Activated naive CD4-positive, alpha-beta T cell treated with anti-CD3 and anti-CD28 coated beads, Interleukin-2, amount 10 ng/mL, durations not matched to agents 7 days and 5 days (primary cell): ENCODE measurements at regions of chr1 and their contacts with region 1.

Region 1: GRCh38 chr1:234309598-234310459 is 63.4 kb upstream of the COA6 start:
- DNase-seq: peak; percentile 80
- H3K4me3 Mint-ChIP-seq: no peak overlapping the region
- H3K27ac Mint-ChIP-seq: no peak overlapping the region
- H3K4me1 Mint-ChIP-seq: peaks cover 6% of the 10 kb centered on the region
- H3K27me3 Mint-ChIP-seq: peaks cover 4% of the 10 kb centered on the region

Region 2: DNA sequence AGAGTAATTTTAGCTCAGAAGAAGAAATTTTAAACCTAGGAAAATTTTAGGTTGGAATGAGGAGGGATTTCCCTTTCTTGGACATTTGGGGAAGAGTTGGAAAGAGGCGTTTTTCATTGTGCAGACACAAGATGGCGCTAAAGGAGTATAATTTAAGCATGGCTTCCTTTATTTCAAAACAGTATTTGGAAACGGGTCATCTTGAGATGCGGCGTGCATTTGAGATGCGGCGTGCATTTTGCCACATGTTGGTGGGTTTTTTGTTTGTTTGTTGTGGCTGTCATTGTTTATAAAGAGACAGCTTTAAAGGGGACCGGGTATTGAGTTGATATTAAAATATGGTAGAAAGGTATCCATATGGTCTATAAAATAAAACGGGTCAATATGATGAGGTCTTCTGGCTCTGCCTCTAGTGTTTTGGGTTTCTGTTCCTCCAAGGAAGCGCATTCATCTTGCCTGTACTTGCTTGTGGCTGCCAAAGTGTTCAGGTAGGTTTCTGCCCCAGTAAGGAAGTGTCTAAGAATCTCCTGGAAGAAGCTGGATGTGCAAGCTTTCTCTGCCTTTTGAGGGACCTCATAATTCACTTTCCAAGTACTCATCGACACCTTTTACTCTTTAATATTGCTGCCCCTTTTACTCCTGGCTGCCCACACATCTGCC is 195.1 kb before region 1 on chr1:
- CTCF ChIA-PET with region 1: interaction called, 47 read pairs
- DNase-seq: peak; percentile 42
- H3K4me3 Mint-ChIP-seq: no peak overlapping the region
- H3K27ac Mint-ChIP-seq: no peak overlapping the region
- H3K4me1 Mint-ChIP-seq: peaks cover 8% of the 10 kb centered on the region
- H3K27me3 Mint-ChIP-seq: peaks cover 32% of the 10 kb centered on the region

Region 3: DNA sequence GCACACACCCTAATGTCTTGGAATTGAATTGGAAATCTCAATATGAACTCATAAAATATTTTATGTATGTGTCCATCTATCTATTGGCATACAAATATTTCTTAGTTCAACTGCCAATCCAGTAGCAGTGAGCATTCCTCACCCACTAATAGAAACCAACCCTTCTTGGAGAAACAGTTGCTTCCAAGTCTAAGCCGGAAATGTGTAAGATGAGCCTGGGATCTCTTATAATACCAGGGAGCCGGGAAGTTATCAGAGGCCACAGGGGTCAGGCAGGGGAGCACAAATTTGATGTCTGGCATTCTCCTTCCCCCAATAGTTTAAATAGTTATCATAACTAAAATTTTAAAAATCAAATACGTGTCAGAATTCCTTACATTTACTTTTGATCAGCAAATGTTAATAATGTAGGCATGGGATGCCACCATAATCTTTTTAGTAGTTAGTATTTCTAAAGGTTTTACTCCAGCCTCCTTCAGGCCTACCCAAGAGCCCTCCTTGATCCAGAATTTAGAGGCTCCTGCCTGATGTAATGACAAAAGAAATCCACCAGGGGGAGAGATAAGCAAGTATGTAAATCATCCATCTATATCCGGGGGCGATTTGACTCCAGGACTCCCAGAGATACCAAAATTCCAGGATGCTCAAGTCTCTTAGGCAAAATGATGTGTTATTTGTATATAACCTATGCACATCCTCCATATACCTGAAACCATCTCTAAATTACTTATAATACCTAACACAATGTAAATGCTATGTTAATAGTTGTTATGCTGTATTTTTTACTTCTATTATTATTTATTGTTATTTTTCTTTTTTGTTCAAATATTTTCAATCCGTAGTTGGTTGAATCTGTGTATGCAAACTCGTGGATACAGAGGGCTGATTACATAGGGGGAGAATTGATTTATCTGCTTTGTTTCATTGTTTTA is 155.2 kb before region 1 on chr1:
- CTCF ChIA-PET with region 1: interaction called, 24 read pairs
- DNase-seq: peak; percentile 32
- H3K4me3 Mint-ChIP-seq: no peak overlapping the region
- H3K27ac Mint-ChIP-seq: no peak overlapping the region
- H3K4me1 Mint-ChIP-seq: no peaks in the 10 kb centered on the region
- H3K27me3 Mint-ChIP-seq: peaks cover 18% of the 10 kb centered on the region

Region 4: DNA sequence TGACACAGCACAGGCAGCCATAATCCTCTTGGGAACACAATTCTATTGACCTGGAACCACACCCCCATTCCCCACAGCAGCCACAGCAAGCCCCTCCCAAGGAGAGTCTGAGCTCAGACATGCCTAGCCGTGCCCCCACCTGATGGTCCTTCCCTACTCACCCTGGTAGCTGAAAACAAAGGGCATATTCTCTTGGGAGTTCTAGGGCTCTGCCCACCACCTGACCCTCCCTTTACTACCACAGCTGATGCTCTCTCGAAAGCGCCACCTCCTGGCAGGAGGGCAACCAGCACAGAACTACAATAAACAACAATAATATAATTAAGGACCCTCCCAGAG is 121.4 kb before region 1 on chr1:
- CTCF ChIA-PET with region 1: interaction called, 19 read pairs
- DNase-seq: peak; percentile 52
- H3K4me3 Mint-ChIP-seq: no peak overlapping the region
- H3K27ac Mint-ChIP-seq: no peak overlapping the region
- H3K4me1 Mint-ChIP-seq: peaks cover 2% of the 10 kb centered on the region
- H3K27me3 Mint-ChIP-seq: peaks cover 73% of the 10 kb centered on the region

Region 5: GRCh38 chr1:234230414-234230862 is 79.4 kb before region 1 on chr1:
- CTCF ChIA-PET with region 1: interaction called, 11 read pairs
- DNase-seq: peak; percentile 57
- H3K4me3 Mint-ChIP-seq: peak overlapping the region; percentile 61
- H3K27ac Mint-ChIP-seq: peak overlapping the region; percentile 83
- H3K4me1 Mint-ChIP-seq: peaks cover 25% of the 10 kb centered on the region
- H3K27me3 Mint-ChIP-seq: peaks cover 11% of the 10 kb centered on the region

Region 6: DNA sequence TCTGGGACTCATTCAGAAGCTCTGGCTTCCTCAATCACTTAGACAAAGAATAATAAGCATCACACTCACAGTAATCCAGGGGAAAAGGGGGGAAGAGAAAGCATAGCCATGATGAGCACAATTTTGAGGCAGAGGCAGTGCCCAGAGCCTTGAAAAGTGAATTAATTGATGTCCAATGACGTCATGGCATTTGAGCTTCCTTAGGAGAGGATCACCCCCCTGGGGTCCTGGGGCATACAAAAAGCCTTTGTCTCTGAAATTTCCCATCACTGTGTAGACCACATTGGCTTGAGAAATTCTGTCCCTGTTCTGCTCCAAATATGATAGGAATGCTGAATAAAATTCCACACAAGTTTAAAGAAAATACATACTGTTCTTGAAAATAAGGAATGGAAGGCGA is 20.9 kb before region 1 on chr1:
- CTCF ChIA-PET with region 1: interaction called, 12 read pairs
- DNase-seq: no peak
- H3K4me3 Mint-ChIP-seq: no peak overlapping the region
- H3K27ac Mint-ChIP-seq: no peak overlapping the region
- H3K4me1 Mint-ChIP-seq: no peaks in the 10 kb centered on the region
- H3K27me3 Mint-ChIP-seq: peaks cover 4% of the 10 kb centered on the region

Region 7: DNA sequence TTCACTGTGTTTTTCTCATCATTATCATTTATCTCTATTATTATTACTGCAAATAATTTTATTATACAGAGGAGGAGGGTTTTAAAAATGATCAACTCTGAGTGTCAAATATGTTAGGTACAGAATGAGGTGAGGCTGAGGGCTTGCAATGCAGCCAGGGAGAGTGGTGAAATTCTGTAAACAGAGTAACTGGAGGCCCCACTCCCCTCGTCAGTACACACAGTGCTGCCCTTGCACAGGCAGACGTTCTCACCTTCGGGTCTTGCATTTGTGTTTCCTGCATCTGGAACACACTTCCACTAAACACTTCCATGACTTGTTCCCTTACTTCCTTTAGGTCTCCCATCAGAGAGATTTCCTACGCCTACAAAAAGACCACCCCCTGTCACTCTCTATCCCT is 39.1 kb after region 1 on chr1:
- CTCF ChIA-PET with region 1: no interaction called
- DNase-seq: no peak
- H3K4me3 Mint-ChIP-seq: no peak overlapping the region
- H3K27ac Mint-ChIP-seq: no peak overlapping the region
- H3K4me1 Mint-ChIP-seq: no peaks in the 10 kb centered on the region
- H3K27me3 Mint-ChIP-seq: peaks cover 16% of the 10 kb centered on the region

Region 8: GRCh38 chr1:234427950-234428642 is 118.3 kb after region 1 on chr1:
- CTCF ChIA-PET with region 1: no interaction called
- DNase-seq: no peak
- H3K4me3 Mint-ChIP-seq: no peak overlapping the region
- H3K27ac Mint-ChIP-seq: no peak overlapping the region
- H3K4me1 Mint-ChIP-seq: peaks cover 6% of the 10 kb centered on the region
- H3K27me3 Mint-ChIP-seq: no peaks in the 10 kb centered on the region

Region 9: DNA sequence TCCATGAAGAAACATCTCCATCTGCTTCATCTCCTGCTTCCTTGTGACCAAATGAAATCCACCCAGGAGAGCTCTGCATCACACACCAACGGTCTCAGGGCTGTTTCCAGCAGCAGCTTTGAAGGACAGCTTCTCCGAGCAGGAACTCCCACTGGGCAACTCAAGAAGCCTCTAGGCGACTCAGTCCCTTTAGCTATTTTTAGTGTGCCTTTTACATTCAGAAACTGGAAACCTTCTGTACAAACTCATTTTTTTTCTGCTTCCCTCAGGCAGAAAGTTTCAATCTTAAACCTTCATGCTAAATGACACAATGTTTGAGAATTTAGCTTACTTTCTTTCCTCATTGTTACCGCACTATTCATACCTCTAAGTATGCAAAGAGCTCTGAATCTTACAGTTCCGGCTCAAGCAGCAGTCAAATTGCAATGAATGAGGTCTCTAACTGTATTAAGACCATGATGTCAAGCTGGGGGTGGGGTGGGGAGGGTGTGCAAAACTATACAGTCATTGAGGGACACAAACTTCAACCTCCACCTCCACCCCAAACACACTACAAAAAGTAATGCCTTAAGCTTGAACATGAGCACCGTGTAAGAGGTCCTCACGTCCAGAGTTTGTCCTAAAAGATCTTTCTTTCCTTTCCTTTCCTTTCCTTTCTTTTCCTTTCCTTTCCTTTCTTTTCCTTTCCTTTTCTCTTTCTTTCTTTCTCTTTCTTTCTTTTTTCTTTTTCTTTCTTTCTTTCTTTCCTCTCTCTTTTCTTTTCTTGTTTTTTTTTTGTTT is 185.6 kb after region 1 on chr1:
- CTCF ChIA-PET with region 1: no interaction called
- DNase-seq: no peak
- H3K4me3 Mint-ChIP-seq: no peak overlapping the region
- H3K27ac Mint-ChIP-seq: peak overlapping the region; percentile 49
- H3K4me1 Mint-ChIP-seq: peaks cover 43% of the 10 kb centered on the region
- H3K27me3 Mint-ChIP-seq: peaks cover 13% of the 10 kb centered on the region